Psoas muscle (tissue), 8 donors: ENCODE measurements at regions of chr9 and their contacts with region 1.

Region 1: DNA sequence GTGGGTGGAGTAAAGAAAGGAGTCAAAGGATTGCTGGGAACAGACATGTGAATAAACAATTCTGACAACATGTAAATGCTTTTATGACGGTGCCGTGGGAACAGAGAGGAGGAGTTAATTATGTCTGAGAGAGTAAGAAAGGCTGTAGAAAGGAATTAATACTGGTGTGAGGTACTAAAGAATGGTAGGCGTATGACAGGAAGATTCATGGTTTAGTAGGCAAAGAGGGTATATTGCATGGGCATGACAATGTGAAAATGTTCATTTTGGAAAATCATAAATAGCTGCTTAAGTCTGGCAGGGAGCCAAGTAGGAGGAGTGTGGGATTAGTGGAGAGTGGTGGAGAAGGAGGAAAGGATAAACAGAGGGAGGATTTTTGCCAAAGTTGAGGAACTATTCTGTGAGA is 19.7 kb downstream of the NAA35 start:
- DNase-seq: no peak
- ATAC-seq: peak in 1 of 4 donors; percentile 21
- H3K4me3 ChIP-seq: no peak overlapping the region
- H3K27ac ChIP-seq: no peak overlapping the region
- H3K4me1 ChIP-seq: no peaks in the 10 kb centered on the region
- H3K27me3 ChIP-seq: no peaks in the 10 kb centered on the region
- CTCF ChIP-seq: no peak

Region 2: DNA sequence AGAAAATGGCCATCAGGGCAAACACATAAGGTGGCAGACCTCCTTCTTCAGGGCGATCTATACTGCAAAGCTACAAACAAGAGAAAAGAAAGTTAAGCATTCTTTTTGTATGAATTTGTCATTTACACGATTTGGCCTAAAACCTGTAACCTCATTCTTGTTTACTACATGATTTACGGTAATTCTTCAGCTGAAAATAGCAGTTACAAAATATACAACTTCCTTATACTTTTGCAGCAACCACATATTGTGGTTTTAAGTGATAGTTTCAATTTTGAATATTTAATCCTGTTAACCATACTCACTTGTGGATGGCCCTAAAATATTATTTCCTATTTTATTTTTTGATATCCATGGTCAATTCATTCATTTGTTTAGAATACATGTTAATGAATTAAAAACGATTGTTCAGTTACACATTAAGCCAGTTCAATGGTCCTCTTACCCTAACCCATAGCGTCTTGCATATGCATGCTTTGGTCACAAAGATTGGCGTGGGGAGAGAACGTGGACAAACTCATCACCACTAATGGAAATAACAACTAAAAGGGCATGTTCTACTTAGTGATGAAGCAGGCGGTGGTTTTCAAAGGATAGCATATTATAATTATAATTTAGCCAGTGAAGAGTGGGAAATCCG is 376.9 kb after region 1 on chr9:
- intact Hi-C with region 1: loop called in 1 of 2 experiments (anchors 10 kb)
- DNase-seq: no peak
- ATAC-seq: no peak
- H3K4me3 ChIP-seq: no peak overlapping the region
- H3K27ac ChIP-seq: no peak overlapping the region
- H3K4me1 ChIP-seq: no peaks in the 10 kb centered on the region
- H3K27me3 ChIP-seq: no peaks in the 10 kb centered on the region
- CTCF ChIP-seq: no peak